ENCODE measurements at regions of chr9 and their contacts with region 1.

Region 1: DNA sequence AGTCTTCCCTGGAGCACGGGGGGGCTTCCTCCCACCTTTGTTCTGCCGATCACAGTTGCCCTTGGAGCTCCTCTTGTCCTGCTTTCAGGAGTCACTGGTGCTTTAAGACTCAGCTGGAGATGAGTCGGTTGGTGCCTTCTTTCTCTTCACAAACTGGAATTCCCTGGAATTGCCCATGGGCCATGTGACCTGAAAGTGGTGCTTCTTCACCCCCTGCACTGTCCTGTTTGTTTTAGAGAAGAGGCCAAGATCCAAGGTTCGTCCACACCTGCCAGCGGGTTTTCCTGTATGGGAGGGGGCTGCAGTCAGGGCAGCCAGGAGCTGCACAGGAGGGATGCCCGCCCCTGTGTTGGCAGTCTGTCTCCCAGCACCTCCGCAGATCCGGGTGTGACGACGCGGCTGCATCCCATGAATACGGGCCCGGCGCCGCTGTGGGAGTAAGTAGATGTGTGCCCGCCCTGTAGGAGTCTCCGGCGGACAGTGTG is 9.5 kb upstream of the MRPS2 start:
- DNase-seq: no peak
- H3K4me3 ChIP-seq: no peak overlapping the region
- CTCF ChIP-seq: no peak

Region 2: GRCh38 chr9:135468866-135469521 is 22.0 kb before region 1 on chr9:
- CTCF ChIA-PET with region 1: no interaction called
- POLR2A ChIA-PET with region 1: no interaction called
- DNase-seq: no peak
- H3K4me3 ChIP-seq: no peak overlapping the region; the same call in 1 of the 2 replicates
- CTCF ChIP-seq: no peak

Region 3: DNA sequence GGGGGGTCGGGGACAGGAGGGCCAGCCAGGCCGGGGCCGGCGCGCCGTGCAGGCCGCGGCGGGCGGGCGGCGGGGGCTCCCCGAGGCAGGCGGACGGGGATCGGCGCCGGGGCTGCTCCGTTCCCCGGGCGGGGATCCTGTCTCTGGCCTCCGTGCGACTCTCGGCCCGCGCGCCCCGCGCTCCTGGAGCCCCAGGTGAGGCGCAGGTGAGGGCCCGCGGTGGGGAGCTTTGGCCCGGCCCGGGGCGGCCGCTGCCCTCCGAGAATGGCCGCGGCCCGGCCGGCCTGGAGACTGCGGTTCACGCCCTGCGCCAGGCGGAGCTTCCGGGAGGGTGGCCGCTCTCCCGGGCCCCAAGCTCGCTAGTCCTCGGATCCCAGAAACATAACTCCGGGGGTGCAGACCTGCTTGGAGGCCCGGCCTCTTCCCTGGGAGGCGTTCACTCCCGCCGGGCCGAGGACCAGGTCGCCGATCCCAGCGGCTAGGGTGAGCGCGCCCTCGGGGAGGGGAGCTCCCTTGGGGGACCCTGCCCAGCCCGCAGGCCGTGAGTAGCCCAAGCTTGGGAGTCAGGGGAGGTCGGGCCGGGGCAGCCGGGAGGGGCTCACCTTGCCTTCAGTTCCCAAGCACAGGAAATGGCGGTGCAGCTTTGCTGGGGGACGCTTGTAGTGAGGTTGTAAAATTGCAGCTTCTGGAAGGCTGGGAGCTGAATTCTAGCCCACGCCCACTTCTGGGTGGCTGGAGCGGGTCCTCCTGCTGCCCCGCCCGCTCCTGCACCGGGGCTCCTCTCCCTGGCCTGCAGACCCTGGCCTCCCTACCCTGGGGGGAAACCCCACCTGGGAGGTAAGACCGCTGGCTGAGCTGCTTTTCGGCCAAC is 10.7 kb before region 1 on chr9:
- CTCF ChIA-PET with region 1: interaction called, 10 read pairs
- POLR2A ChIA-PET with region 1: no interaction called
- DNase-seq: no peak
- H3K4me3 ChIP-seq: peak overlapping the region; percentile 76
- CTCF ChIP-seq: no peak

Region 4: DNA sequence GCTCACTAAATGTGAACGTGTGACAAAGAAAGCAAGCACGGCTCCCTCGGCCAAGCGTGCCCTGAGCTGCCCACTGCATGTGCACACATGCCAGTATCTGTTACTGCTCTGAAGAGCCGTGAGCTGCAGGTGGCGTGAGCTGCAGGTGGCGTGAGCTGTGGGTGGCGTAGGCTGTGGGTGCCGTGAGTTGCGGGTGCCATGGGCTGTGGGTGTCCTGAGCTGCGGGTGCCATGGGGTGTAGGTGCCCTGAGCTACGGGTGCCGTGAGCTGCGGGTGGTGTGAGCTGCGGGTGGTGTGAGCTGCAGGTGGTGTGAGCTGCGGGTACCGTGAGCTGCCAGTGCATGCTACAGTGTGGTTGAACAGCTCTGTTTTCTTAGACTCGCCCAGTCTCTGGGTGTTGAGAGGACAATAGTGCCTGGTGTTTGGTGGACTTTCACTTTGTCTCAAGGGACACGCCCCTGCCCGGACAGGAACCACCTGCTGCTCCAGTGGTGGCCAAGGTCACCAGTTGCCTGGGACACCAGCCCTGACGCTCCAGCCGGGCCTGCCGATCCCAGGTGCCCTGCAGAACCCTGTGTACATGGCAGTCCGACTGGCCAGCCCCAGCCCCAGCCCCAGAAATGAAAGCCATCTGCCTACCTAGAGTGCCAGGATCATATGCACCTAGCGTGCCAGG is 806.1 kb after region 1 on chr9:
- CTCF ChIA-PET with region 1: no interaction called
- POLR2A ChIA-PET with region 1: no interaction called
- DNase-seq: no peak
- H3K4me3 ChIP-seq: no peak overlapping the region
- CTCF ChIP-seq: no peak